ENCODE measurements at regions of chr20 and their contacts with region 1.

Region 1: GRCh38 chr20:3767427-3768341 is at the start of gene ADISSP:
- DNase-seq: peak; percentile 99
- ATAC-seq: peak; percentile 94
- H3K4me3 Mint-ChIP-seq: peak within 1 kb of the TSS; percentile 94
- H3K27ac Mint-ChIP-seq: peak within 1 kb of the TSS; percentile 79; the same call in 1 of the 2 replicates
- H3K4me1 Mint-ChIP-seq: peaks cover 19% of the 10 kb centered on the region
- H3K27me3 Mint-ChIP-seq: peaks cover 13% of the 10 kb centered on the region
- CTCF ChIP-seq: no peak
- total RNA-seq, gene ADISSP: 109 to 129 TPM (median 113 TPM) in 3 replicates

Region 2: DNA sequence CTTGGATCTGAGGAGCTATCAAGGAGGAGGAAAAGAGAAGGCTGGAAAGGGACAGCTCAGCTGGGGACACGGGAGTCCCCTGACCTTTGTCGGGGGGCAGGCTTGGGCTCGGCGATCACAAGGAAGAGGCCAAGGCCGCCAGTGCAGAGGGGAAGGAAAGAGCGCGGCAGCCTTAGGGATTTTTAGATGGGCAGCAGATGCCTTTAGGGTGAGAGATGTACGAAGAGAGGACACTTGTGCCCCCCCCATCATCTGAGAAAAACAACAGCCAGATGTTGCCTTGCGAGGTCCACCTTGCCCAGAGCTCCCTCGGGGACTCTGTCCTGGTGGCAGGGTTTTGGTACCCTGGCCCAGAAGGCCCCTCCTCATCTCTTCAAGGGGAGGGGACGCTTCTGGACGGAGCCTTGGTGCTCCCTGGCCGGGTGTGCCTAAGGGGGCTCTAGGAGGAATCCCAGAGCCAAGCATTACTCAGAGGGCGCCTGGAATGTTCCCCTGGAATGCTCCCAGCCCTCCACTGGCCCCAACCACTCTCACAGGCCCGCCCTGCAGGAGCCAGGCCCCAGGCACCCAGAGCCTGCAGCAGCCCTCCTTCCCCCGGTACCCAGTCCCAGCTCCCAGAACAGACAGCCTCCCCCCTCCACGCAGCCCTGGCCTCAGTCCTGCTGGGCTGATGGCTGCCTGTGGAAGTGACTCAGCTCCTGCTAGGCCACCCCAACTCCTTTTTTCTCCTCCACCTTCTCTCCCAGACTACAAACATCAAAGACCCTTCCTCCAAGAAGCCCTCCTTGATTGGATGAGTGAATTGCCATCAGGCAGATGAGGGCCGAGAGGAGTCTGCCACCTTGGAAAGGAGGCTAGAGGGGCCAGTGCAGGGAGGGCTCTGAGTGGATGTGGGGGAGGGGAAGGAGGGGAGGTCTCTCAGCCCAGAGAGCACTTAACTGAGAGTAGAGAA is 87.7 kb before region 1 on chr20:
- CTCF ChIA-PET with region 1: interaction called, 18 read pairs
- POLR2A ChIA-PET with region 1: no interaction called
- DNase-seq: peak; percentile 42
- ATAC-seq: peak; percentile 8
- H3K4me3 Mint-ChIP-seq: peak overlapping the region; percentile 34
- H3K27ac Mint-ChIP-seq: no peak overlapping the region
- H3K4me1 Mint-ChIP-seq: peaks cover 37% of the 10 kb centered on the region
- H3K27me3 Mint-ChIP-seq: peaks cover 25% of the 10 kb centered on the region
- CTCF ChIP-seq: no peak

Region 3: GRCh38 chr20:3744806-3745685 is 22.6 kb before region 1 on chr20:
- CTCF ChIA-PET with region 1: interaction called, 195 read pairs
- POLR2A ChIA-PET with region 1: interaction called, 13 read pairs
- DNase-seq: peak; percentile 100
- ATAC-seq: peak; percentile 85
- H3K4me3 Mint-ChIP-seq: peak overlapping the region; percentile 89
- H3K27ac Mint-ChIP-seq: peak overlapping the region; percentile 88
- H3K4me1 Mint-ChIP-seq: peaks cover 21% of the 10 kb centered on the region
- H3K27me3 Mint-ChIP-seq: peaks cover 44% of the 10 kb centered on the region
- CTCF ChIP-seq: no peak

Region 4: GRCh38 chr20:3786665-3787323 is 19.1 kb after region 1 on chr20 and contains the start of gene CENPB:
- CTCF ChIA-PET with region 1: interaction called, 53 read pairs
- POLR2A ChIA-PET with region 1: no interaction called
- DNase-seq: peak; percentile 89
- ATAC-seq: peak; percentile 81
- H3K4me3 Mint-ChIP-seq: peak within 1 kb of the TSS; percentile 83
- H3K27ac Mint-ChIP-seq: no peak within 1 kb of the TSS
- H3K4me1 Mint-ChIP-seq: peaks cover 20% of the 10 kb centered on the region
- H3K27me3 Mint-ChIP-seq: peaks cover 24% of the 10 kb centered on the region
- CTCF ChIP-seq: peak; percentile 65; the same call in 1 of the 2 replicates
- total RNA-seq, gene CENPB: 55.3 to 58.7 TPM (median 57.6 TPM) in 3 replicates

Region 5: GRCh38 chr20:3854462-3854871 is 86.8 kb after region 1 on chr20:
- CTCF ChIA-PET with region 1: interaction called, 14 read pairs
- POLR2A ChIA-PET with region 1: no interaction called
- DNase-seq: peak; percentile 22
- ATAC-seq: peak; percentile 71
- H3K4me3 Mint-ChIP-seq: no peak overlapping the region
- H3K27ac Mint-ChIP-seq: peak overlapping the region; percentile 36; the same call in 1 of the 2 replicates
- H3K4me1 Mint-ChIP-seq: peaks cover 3% of the 10 kb centered on the region; the same call in 1 of the 2 replicates
- H3K27me3 Mint-ChIP-seq: no peaks in the 10 kb centered on the region
- CTCF ChIP-seq: no peak

Region 6: GRCh38 chr20:3919352-3919751 is 151.7 kb after region 1 on chr20:
- CTCF ChIA-PET with region 1: no interaction called
- POLR2A ChIA-PET with region 1: no interaction called
- DNase-seq: no peak
- ATAC-seq: no peak
- H3K4me3 Mint-ChIP-seq: no peak overlapping the region
- H3K27ac Mint-ChIP-seq: no peak overlapping the region
- H3K4me1 Mint-ChIP-seq: peaks cover 5% of the 10 kb centered on the region; the same call in 1 of the 2 replicates
- H3K27me3 Mint-ChIP-seq: no peaks in the 10 kb centered on the region
- CTCF ChIP-seq: no peak